ENCODE measurements at regions of chr17 and their contacts with region 1.

Region 1: GRCh38 chr17:43125133-43125966 is at the start of gene BRCA1:
- DNase-seq: peak; percentile 96 to 99 (median 99)
- H3K4me3 ChIP-seq: peak within 1 kb of the TSS; percentile 76 to 100 (median 78)
- H3K4me3 Mint-ChIP-seq: peak within 1 kb of the TSS; percentile 97 to 99
- H3K27ac ChIP-seq: peak within 1 kb of the TSS; percentile 23 to 90
- H3K27ac Mint-ChIP-seq: peak within 1 kb of the TSS; percentile 95 to 98 (median 96)
- H3K4me1 ChIP-seq: peaks cover 25 to 30% of the 10 kb centered on the region in 2 donors
- H3K4me1 Mint-ChIP-seq: peaks cover 30% of the 10 kb centered on the region
- H3K27me3 ChIP-seq: no peaks in the 10 kb centered on the region
- H3K27me3 Mint-ChIP-seq: peaks cover 0 to 3% (median 0%) of the 10 kb centered on the region in 3 donors
- CTCF ChIP-seq: no peak
- polyA plus RNA-seq, gene BRCA1: 0.87 to 2.6 (median 1.9) TPM

Region 2: GRCh38 chr17:43018008-43018853 is 107.1 kb before region 1 on chr17:
- intact Hi-C with region 1: loop called (anchors 10 kb)
- DNase-seq: peak; percentile 63 to 74 (median 73)
- H3K4me3 ChIP-seq: peak overlapping the region in 1 of 3 experiments; percentile 10
- H3K4me3 Mint-ChIP-seq: peak overlapping the region; percentile 25 to 54
- H3K27ac ChIP-seq: peak overlapping the region; percentile 7 to 54
- H3K27ac Mint-ChIP-seq: peak overlapping the region; percentile 72 to 91 (median 84)
- H3K4me1 ChIP-seq: peaks cover 58 to 59% of the 10 kb centered on the region in 2 donors
- H3K4me1 Mint-ChIP-seq: peaks cover 62% of the 10 kb centered on the region
- H3K27me3 ChIP-seq: no peaks in the 10 kb centered on the region
- H3K27me3 Mint-ChIP-seq: peaks cover 0 to 2% (median 0%) of the 10 kb centered on the region in 3 donors
- CTCF ChIP-seq: no peak

Region 3: DNA sequence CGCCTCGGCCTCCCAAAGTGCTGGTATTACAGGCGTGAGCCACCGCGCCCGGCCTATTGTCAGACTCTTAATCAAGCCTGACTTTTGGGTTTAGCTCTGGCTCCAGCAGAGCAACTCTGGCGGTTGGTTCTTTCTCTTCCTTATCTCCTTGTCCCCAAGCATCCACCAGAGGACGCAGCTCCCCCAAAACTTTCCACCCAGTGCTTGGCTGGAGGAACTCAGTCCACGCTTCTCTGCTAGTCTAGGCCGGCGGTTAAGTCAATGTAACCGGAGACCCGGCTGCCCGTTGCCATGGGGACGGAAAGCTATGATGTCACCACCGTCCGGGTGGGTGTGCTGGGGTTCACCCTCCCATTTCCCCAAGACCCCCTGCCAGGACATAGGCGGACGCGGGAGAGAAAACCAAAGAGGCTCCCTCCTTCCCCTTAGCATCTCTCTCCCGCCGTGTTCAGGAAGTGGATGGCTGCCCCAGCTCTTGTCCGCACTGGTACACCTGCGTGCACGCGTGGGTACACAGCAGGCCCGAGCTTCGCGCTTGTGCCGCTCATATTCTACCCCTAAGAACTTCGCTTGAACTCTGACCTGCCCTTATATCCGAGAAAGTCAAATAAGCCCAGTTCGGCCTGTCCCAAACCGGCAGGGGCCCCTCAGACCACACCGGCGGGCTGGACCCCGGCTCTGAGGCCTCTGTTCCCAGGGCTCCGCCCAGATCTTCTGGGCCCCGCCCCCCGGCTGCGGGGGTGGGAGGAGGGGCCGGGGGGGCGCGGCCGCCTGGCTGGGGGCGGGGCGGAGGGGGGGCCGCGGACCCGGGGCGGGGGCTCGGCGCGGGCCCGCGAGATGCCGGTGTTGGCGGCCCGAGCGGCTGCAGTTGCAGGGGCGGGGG is 100.7 kb before region 1 on chr17 and contains the start of gene RND2:
- intact Hi-C with region 1: loop called (anchors 10 kb)
- DNase-seq: peak; percentile 72 to 83 (median 80)
- H3K4me3 ChIP-seq: peak within 1 kb of the TSS; percentile 36 to 81 (median 41)
- H3K4me3 Mint-ChIP-seq: peak within 1 kb of the TSS; percentile 83 to 96
- H3K27ac ChIP-seq: peak within 1 kb of the TSS in 1 of 2 donors; percentile 9
- H3K27ac Mint-ChIP-seq: peak within 1 kb of the TSS in 6 of 7 donors; percentile 23 to 79 (median 62)
- H3K4me1 ChIP-seq: peaks cover 35 to 44% of the 10 kb centered on the region in 2 donors
- H3K4me1 Mint-ChIP-seq: peaks cover 38% of the 10 kb centered on the region
- H3K27me3 ChIP-seq: peaks cover 0 to 15% of the 10 kb centered on the region in 2 donors
- H3K27me3 Mint-ChIP-seq: peaks cover 8 to 30% (median 16%) of the 10 kb centered on the region in 3 donors
- CTCF ChIP-seq: peak; percentile 70
- polyA plus RNA-seq, gene RND2: not detected

Region 4: DNA sequence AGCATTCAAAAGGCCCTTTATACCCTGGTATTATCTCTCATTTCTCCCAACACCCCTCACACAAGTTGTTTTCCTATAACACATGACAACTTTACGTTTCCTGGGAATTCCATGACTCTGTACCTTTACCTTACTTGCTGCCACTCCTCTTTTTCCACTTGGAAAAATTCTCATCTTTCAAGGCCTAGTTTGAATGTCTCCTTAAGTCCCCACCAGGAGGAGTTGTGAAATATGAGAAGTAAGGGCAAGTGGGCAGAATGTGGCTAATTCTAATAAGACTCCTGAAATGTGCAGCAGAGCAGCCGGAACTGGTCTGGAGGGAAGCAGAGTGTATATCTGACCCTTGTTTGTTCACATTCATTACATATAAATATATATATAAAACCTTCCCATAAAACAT is 39.9 kb before region 1 on chr17:
- intact Hi-C with region 1: no loop called
- DNase-seq: no peak
- H3K4me3 ChIP-seq: no peak overlapping the region
- H3K4me3 Mint-ChIP-seq: no peak overlapping the region
- H3K27ac ChIP-seq: no peak overlapping the region
- H3K27ac Mint-ChIP-seq: no peak overlapping the region
- H3K4me1 ChIP-seq: no peaks in the 10 kb centered on the region
- H3K4me1 Mint-ChIP-seq: no peaks in the 10 kb centered on the region
- H3K27me3 ChIP-seq: no peaks in the 10 kb centered on the region
- H3K27me3 Mint-ChIP-seq: no peaks in the 10 kb centered on the region
- CTCF ChIP-seq: no peak